ENCODE measurements at regions of chr6 and their contacts with region 1.

Region 1: GRCh38 chr6:90483116-90483839 is 103.6 kb downstream of the MAP3K7 start:
- DNase-seq: peak; percentile 79
- H3K4me3 ChIP-seq: no peak overlapping the region
- H3K27ac ChIP-seq: no peak overlapping the region
- H3K4me1 ChIP-seq: peaks cover 4% of the 10 kb centered on the region
- H3K27me3 ChIP-seq: no peaks in the 10 kb centered on the region

Region 2: GRCh38 chr6:89934685-89935366 is 548.5 kb before region 1 on chr6:
- in situ Hi-C with region 1: loop called (anchors 10 kb)
- DNase-seq: no peak
- H3K4me3 ChIP-seq: no peak overlapping the region
- H3K27ac ChIP-seq: no peak overlapping the region
- H3K4me1 ChIP-seq: no peaks in the 10 kb centered on the region
- H3K27me3 ChIP-seq: peaks cover 5% of the 10 kb centered on the region; the same call in 1 of the 2 replicates

Measured in GM23248 (cell line).